Calu3 (cell line): ENCODE measurements at regions of chr17 and their contacts with region 1.

Region 1: DNA sequence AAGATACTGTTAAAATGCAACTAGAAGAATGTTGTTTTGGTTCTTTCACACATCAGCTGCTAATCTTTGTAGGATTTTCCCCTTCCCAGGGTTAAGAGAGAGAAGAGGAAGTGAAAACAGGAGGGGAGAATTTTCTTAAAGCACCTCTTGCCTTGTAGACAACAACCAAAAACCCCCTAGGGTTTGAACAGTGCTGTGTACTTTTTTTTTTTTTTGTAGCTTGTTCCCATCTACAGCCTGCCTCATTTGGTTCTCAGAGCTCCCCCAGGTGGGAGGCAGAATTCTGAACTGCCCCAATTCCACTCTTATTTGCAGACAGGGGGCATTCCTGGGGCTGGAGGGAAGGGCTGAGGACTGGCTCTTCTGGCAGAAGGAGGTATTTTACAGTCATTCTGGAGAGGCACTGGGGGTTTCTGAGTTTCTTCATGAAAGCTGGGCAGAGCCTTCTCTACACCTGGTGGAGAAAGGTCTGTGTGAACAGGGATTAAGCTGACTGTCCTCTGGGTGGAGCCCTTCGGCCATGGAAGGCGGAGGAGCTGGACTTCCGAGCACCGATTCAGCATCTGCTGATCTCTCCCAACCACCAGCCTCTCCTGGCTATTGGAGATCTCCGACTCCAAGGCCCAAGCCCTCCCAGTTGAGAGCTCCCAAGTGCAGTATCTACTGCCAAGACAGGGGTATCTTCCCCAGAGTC is 32.2 kb downstream of the SMARCE1 start:
- DNase-seq: peak; percentile 100
- H3K4me3 Mint-ChIP-seq: no peak overlapping the region
- H3K27ac Mint-ChIP-seq: no peak overlapping the region
- H3K4me1 Mint-ChIP-seq: peaks cover 26% of the 10 kb centered on the region
- H3K27me3 Mint-ChIP-seq: peaks cover 97% of the 10 kb centered on the region
- CTCF ChIP-seq: no peak

Region 2: GRCh38 chr17:39939588-39940419 is 675.6 kb before region 1 on chr17:
- CTCF ChIA-PET with region 1: no interaction called
- intact Hi-C with region 1: no loop called
- DNase-seq: peak; percentile 76
- H3K4me3 Mint-ChIP-seq: no peak overlapping the region
- H3K27ac Mint-ChIP-seq: no peak overlapping the region
- H3K4me1 Mint-ChIP-seq: peaks cover 12% of the 10 kb centered on the region
- H3K27me3 Mint-ChIP-seq: peaks cover 63% of the 10 kb centered on the region
- CTCF ChIP-seq: no peak

Region 3: DNA sequence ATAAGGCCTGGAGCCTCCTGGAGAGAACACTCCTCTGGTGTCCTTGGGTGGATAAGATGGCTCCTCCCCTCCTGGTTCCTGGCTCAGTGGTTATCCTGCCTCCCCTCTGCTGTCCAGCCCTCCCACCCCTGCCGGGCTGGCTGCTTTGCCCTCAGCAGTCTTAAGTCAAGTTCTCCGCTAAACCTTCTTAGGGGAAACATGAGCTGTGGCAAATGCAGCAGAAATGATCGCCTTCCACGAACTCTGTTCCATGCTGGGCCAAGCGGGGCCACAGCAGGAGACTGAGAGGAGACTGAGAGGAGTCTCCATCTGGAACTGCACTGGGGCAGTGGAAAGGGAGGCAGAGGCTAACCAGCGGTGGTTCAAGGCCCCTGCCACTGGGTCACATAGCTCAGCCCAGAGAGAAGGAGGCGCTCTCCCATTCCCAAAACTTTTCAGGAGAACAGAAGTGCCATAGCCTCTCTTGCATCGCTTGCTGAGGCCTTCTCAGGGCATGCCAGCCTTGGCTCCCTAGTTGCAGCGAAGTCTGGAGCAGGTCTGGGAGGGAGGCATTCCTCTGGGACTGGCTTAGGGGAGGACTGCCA is 140.9 kb before region 1 on chr17:
- CTCF ChIA-PET with region 1: interaction called, 33 read pairs
- intact Hi-C with region 1: no loop called
- DNase-seq: no peak
- H3K4me3 Mint-ChIP-seq: no peak overlapping the region
- H3K27ac Mint-ChIP-seq: no peak overlapping the region
- H3K4me1 Mint-ChIP-seq: no peaks in the 10 kb centered on the region
- H3K27me3 Mint-ChIP-seq: peaks cover 65% of the 10 kb centered on the region
- CTCF ChIP-seq: no peak

Region 4: GRCh38 chr17:40559954-40560591 is 55.4 kb before region 1 on chr17:
- CTCF ChIA-PET with region 1: interaction called, 50 read pairs
- intact Hi-C with region 1: loop called (anchors 2 kb)
- DNase-seq: peak; percentile 100
- H3K4me3 Mint-ChIP-seq: peak overlapping the region; percentile 47
- H3K27ac Mint-ChIP-seq: no peak overlapping the region
- H3K4me1 Mint-ChIP-seq: peaks cover 17% of the 10 kb centered on the region
- H3K27me3 Mint-ChIP-seq: peaks cover 99% of the 10 kb centered on the region
- CTCF ChIP-seq: no peak

Region 5: GRCh38 chr17:40647624-40648383 is 32.4 kb after region 1 on chr17 and contains the start of gene SMARCE1:
- CTCF ChIA-PET with region 1: interaction called, 58 read pairs
- intact Hi-C with region 1: loop called (anchors 1 kb)
- DNase-seq: peak; percentile 98
- H3K4me3 Mint-ChIP-seq: peak within 1 kb of the TSS; percentile 74
- H3K27ac Mint-ChIP-seq: peak within 1 kb of the TSS; percentile 87
- H3K4me1 Mint-ChIP-seq: peaks cover 29% of the 10 kb centered on the region
- H3K27me3 Mint-ChIP-seq: no peaks in the 10 kb centered on the region
- CTCF ChIP-seq: no peak
- total RNA-seq, gene SMARCE1: 755 and 768 TPM in 2 replicates

Region 6: GRCh38 chr17:40726919-40727318 is 111.5 kb after region 1 on chr17:
- CTCF ChIA-PET with region 1: interaction called, 36 read pairs
- intact Hi-C with region 1: loop called (anchors 1 kb)
- DNase-seq: peak; percentile 45
- H3K4me3 Mint-ChIP-seq: no peak overlapping the region
- H3K27ac Mint-ChIP-seq: no peak overlapping the region
- H3K4me1 Mint-ChIP-seq: peaks cover 19% of the 10 kb centered on the region
- H3K27me3 Mint-ChIP-seq: peaks cover 54% of the 10 kb centered on the region
- CTCF ChIP-seq: no peak

Region 7: DNA sequence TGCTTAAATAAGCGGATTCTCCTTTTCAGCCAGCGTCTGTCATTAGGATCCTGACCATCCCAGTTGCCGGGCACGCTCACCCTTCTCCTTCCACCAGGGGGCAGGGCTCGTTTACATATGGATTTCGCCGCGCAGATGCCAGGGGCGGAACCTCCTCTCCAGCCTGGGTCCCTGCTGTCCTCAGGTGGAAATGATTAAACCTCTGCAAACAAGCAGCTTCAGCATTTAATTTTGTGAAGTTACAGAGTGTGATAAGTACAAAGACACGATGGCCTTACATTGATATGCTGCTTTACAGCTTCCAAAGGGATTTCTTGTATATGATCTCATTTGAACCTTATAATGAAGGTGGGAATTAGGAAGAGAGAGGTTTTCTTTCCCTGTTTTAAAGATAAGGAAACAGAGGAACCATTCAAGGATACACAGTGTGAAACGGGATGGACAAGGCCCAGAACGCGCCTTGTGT is 188.2 kb after region 1 on chr17:
- CTCF ChIA-PET with region 1: interaction called, 148 read pairs
- intact Hi-C with region 1: loop called (anchors 1 kb)
- DNase-seq: peak; percentile 100
- H3K4me3 Mint-ChIP-seq: no peak overlapping the region
- H3K27ac Mint-ChIP-seq: no peak overlapping the region
- H3K4me1 Mint-ChIP-seq: no peaks in the 10 kb centered on the region
- H3K27me3 Mint-ChIP-seq: peaks cover 38% of the 10 kb centered on the region
- CTCF ChIP-seq: peak; percentile 100